ENCODE measurements at regions of chr10 and their contacts with region 1.

Region 1: GRCh38 chr10:35195361-35196306 is 69.0 kb downstream of the CREM start:
- DNase-seq: peak; percentile 86
- H3K4me3 Mint-ChIP-seq: peak overlapping the region; percentile 84
- H3K27ac Mint-ChIP-seq: peak overlapping the region; percentile 100
- H3K4me1 Mint-ChIP-seq: peaks cover 59% of the 10 kb centered on the region
- H3K27me3 Mint-ChIP-seq: no peaks in the 10 kb centered on the region

Region 2: DNA sequence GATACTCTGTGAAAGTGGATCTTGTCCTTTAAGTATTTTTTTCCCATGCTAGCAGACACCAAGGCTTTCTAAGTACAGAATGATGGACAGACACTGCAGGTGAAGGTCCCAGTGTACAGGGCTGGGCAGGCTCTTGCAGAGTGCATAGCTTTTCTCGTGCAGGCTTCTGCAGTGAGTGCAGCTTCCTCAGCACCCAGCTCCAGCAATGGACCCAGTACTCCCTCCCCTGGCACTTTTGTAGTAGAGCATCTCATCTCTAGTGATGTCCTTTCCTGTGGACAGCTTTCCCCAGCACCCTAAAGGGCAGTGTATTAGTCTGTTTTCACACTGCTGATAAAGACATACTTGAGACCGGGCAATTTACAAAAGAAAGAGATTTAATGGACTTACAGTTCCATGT is 209.8 kb before region 1 on chr10:
- CTCF ChIA-PET with region 1: no interaction called
- POLR2A ChIA-PET with region 1: no interaction called
- DNase-seq: no peak
- H3K4me3 Mint-ChIP-seq: no peak overlapping the region
- H3K27ac Mint-ChIP-seq: no peak overlapping the region
- H3K4me1 Mint-ChIP-seq: no peaks in the 10 kb centered on the region
- H3K27me3 Mint-ChIP-seq: no peaks in the 10 kb centered on the region

Region 3: GRCh38 chr10:35119378-35119777 is 76.3 kb before region 1 on chr10:
- CTCF ChIA-PET with region 1: interaction called, 16 read pairs
- POLR2A ChIA-PET with region 1: interaction called, 3 read pairs
- DNase-seq: no peak
- H3K4me3 Mint-ChIP-seq: no peak overlapping the region
- H3K27ac Mint-ChIP-seq: no peak overlapping the region
- H3K4me1 Mint-ChIP-seq: peaks cover 8% of the 10 kb centered on the region
- H3K27me3 Mint-ChIP-seq: peaks cover 5% of the 10 kb centered on the region

Region 4: GRCh38 chr10:35150308-35150707 is 45.3 kb before region 1 on chr10:
- CTCF ChIA-PET with region 1: interaction called, 11 read pairs
- POLR2A ChIA-PET with region 1: interaction called, 5 read pairs
- DNase-seq: no peak
- H3K4me3 Mint-ChIP-seq: peak overlapping the region; percentile 41
- H3K27ac Mint-ChIP-seq: peak overlapping the region; percentile 85
- H3K4me1 Mint-ChIP-seq: peaks cover 56% of the 10 kb centered on the region
- H3K27me3 Mint-ChIP-seq: no peaks in the 10 kb centered on the region

Region 5: DNA sequence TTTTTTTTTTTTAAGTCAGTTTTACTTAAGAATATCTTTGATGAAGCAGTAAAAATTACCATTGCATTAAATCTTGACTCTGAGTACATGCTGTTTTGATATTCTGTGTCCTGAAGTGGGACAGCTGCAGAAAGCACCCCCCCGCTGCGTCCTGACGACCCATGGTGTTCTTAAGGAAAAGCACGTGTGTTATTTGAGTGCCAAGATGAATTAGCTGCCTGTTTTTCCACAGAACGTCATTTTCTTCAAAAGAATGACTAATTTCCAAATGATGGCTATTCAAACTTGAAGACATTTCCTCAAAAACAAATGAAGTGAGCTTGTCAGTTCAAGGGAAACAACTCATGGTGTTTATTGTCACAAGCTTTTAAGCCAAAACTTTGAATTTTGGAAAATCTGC is 23.1 kb before region 1 on chr10:
- CTCF ChIA-PET with region 1: interaction called, 14 read pairs
- POLR2A ChIA-PET with region 1: no interaction called
- DNase-seq: no peak
- H3K4me3 Mint-ChIP-seq: no peak overlapping the region
- H3K27ac Mint-ChIP-seq: no peak overlapping the region
- H3K4me1 Mint-ChIP-seq: peaks cover 1% of the 10 kb centered on the region
- H3K27me3 Mint-ChIP-seq: no peaks in the 10 kb centered on the region

Region 6: DNA sequence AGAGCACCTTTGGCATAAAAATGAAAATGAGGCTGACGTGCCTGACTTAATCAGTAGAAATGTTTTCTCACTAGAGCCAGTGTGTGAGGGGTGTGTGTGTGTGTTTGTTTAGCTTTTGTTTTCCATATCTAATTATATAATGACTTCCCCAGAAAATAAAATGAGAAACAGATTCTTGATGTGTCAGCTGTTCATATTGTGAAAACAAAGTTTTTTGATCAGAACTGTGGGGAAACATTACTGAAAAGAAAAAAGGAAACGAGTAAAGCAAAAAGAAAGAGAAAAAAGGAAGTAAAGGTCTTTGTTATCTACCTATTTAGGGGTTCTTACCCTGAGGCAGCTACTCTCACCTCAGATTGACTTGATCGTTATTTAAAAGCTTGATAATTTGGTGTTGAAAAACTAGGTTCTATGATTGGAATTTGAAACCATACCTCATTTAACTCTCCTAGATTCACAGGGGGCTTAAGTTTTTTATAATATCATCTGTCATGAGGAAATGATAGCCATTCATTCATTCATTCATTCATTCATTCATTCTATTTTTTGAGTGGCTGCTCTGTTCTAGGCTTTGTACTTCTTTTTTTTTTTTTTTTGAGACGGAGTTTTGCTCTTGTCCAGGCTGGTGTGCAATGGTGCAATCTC is 11.0 kb before region 1 on chr10:
- CTCF ChIA-PET with region 1: interaction called, 16 read pairs
- POLR2A ChIA-PET with region 1: no interaction called
- DNase-seq: no peak
- H3K4me3 Mint-ChIP-seq: no peak overlapping the region
- H3K27ac Mint-ChIP-seq: peak overlapping the region; percentile 9
- H3K4me1 Mint-ChIP-seq: peaks cover 7% of the 10 kb centered on the region
- H3K27me3 Mint-ChIP-seq: no peaks in the 10 kb centered on the region

Region 7: DNA sequence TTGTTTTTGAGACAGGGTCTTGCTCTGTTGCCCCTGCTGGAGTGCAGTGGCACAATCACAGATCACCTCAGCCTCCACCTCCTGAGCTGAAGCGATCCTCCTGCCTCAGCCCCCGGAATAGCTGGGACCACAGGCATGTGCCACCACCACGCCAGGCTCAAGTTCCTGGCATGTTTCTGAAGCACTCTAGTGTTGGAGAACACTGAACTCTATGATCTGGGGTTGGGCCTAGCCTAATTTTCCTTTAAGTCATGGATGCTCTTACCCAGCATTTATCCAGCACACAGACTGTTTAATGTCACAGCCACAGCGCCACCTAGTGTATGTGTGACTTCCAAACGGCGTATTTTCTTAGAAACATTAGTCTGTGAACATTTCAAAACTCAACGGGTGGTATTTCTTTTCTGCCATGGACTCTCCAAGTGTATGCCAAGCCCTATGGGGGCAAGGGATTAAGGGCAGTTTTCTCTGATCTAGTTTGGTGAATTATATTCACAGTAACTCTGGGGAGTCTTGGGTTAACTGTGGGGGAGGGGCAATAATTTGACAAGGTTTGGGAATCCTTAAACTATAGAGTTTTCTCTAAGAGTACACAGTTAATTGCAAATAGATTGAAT is 22.8 kb after region 1 on chr10:
- CTCF ChIA-PET with region 1: interaction called, 130 read pairs
- POLR2A ChIA-PET with region 1: interaction called, 8 read pairs
- DNase-seq: peak; percentile 93
- H3K4me3 Mint-ChIP-seq: no peak overlapping the region
- H3K27ac Mint-ChIP-seq: peak overlapping the region; percentile 78
- H3K4me1 Mint-ChIP-seq: peaks cover 42% of the 10 kb centered on the region
- H3K27me3 Mint-ChIP-seq: no peaks in the 10 kb centered on the region

Region 8: DNA sequence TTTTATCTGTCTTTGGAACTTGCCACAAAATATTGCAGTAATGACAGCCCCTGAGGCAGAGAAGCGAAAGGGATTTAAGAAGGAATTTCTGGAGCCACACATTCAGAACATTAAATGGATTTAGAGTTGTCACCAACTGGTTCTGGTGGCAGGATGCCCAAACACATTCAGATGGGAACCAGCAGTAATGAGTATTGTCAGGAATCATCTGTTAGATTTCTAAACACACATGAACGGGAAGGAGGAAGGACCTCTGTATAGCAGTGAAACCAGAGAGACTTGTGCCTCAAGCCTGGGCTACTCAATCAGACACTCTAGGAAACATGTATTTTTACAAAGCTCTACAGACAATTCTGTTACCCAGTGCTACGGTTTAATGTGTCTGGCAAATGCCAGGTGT is 36.9 kb after region 1 on chr10:
- CTCF ChIA-PET with region 1: no interaction called
- POLR2A ChIA-PET with region 1: no interaction called
- DNase-seq: no peak
- H3K4me3 Mint-ChIP-seq: no peak overlapping the region
- H3K27ac Mint-ChIP-seq: no peak overlapping the region
- H3K4me1 Mint-ChIP-seq: no peaks in the 10 kb centered on the region
- H3K27me3 Mint-ChIP-seq: no peaks in the 10 kb centered on the region

Measured in activated CD4-positive, alpha-beta T cell treated with anti-CD3 and anti-CD28 coated beads, Interleukin-2, amount 10 ng/mL, durations not matched to agents 7 days and 5 days (primary cell).